GM10248 (cell line): ENCODE measurements at regions of chr3 and their contacts with region 1.

Region 1: GRCh38 chr3:39288300-39288808 is 8.5 kb upstream of the CX3CR1 start:
- DNase-seq: peak; percentile 94
- CTCF ChIP-seq: peak; percentile 95

Region 2: GRCh38 chr3:39101022-39101689 is 187.2 kb before region 1 on chr3:
- CTCF ChIA-PET with region 1: interaction called, 10 read pairs
- POLR2A ChIA-PET with region 1: no interaction called
- DNase-seq: peak; percentile 79
- CTCF ChIP-seq: peak; percentile 74

Region 3: DNA sequence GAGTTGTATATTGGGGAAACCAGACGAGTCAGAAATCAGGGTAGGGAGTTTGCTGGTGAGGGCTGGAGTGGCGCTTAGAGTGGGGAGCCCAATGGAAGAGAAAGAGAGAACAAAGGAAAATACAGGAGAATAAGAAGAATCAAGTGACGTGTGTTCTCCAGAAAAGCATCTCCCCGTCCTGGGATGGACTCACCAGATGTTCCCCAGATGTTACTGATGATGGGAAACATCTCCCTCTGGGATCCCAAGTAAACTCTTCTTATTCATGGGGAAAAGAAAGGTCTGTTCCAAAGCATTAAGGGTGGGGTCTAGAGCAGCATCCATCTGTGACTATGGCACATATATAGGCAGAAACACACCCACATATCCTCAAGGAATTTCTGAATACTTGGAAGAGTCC is 131.9 kb before region 1 on chr3:
- CTCF ChIA-PET with region 1: interaction called, 18 read pairs
- POLR2A ChIA-PET with region 1: no interaction called
- DNase-seq: no peak
- CTCF ChIP-seq: no peak

Region 4: DNA sequence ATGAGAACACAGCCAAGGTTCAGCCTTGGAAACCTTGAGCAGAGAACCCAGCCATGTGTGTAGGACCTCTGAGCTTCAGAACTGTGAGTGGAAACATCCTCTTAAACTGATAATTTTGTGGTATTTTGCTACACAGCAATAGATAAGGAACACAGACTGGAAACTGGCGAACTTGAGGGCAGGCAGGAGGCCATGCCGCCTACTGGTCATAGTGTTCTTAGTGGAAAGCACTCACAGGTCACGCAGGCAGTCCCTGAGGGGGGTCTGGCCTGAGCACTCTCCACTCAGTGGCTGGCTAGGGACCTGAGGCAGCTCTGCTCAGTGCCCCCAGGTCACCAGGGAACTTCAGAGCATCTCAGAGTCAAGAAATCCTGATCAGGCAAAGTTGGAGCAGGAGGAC is 86.3 kb before region 1 on chr3:
- CTCF ChIA-PET with region 1: interaction called, 691 read pairs
- POLR2A ChIA-PET with region 1: no interaction called
- DNase-seq: no peak
- CTCF ChIP-seq: no peak

Region 5: GRCh38 chr3:39260957-39261356 is 27.4 kb before region 1 on chr3:
- CTCF ChIA-PET with region 1: interaction called, 24 read pairs
- POLR2A ChIA-PET with region 1: no interaction called
- DNase-seq: peak; percentile 46
- CTCF ChIP-seq: peak; percentile 5

Region 6: GRCh38 chr3:39346785-39347585 is 58.6 kb after region 1 on chr3:
- CTCF ChIA-PET with region 1: interaction called, 20 read pairs
- POLR2A ChIA-PET with region 1: interaction called, 3 read pairs
- DNase-seq: no peak
- CTCF ChIP-seq: no peak

Region 7: DNA sequence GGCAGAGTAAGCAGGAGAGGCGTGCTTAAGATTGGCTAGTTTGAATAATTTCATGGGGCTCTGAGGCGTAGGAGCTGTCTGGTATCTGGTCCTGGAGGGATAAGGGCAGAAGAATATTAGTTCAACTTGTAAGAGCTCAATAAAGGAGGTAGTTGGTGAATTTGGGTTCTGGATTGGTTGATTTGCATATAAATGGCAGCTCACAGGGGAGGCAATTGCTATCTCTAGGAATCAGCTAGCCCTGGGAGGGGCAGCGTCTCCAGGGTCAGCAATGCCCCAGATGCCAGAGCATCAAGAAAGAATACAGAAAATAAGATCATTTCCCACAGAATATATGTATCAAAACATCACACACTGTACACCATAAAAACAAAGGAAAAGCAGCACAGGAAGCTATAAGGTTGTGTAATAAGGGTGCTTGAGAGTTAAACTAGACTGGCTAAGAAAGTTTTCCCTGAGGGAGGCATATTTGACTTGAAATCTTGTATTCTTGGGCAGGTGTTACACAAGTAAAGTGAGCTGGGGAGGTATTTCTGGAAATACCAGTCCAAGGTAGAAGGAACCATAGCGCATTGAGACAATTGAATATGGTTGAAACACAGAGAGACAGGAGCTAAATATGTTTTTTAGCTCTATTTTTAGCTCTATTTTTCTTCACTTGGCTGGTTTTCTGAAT is 185.2 kb after region 1 on chr3:
- CTCF ChIA-PET with region 1: no interaction called
- POLR2A ChIA-PET with region 1: no interaction called
- DNase-seq: no peak
- CTCF ChIP-seq: no peak